Sigmoid colon (tissue), 7 donors: ENCODE measurements at regions of chr12 and their contacts with region 1.

Region 1: GRCh38 chr12:110826592-110827200 is 20.1 kb upstream of the CCDC63 start:
- DNase-seq: peak; percentile 90
- H3K4me3 ChIP-seq: peak overlapping the region in 1 of 4 donors; percentile 10
- H3K27ac ChIP-seq: no peak overlapping the region
- H3K4me1 ChIP-seq: no peaks in the 10 kb centered on the region
- H3K27me3 ChIP-seq: no peaks in the 10 kb centered on the region
- CTCF ChIP-seq: peak; percentile 67 to 83 (median 74)
- EP300 ChIP-seq: no peak
- POLR2A ChIP-seq: no peak

Region 2: DNA sequence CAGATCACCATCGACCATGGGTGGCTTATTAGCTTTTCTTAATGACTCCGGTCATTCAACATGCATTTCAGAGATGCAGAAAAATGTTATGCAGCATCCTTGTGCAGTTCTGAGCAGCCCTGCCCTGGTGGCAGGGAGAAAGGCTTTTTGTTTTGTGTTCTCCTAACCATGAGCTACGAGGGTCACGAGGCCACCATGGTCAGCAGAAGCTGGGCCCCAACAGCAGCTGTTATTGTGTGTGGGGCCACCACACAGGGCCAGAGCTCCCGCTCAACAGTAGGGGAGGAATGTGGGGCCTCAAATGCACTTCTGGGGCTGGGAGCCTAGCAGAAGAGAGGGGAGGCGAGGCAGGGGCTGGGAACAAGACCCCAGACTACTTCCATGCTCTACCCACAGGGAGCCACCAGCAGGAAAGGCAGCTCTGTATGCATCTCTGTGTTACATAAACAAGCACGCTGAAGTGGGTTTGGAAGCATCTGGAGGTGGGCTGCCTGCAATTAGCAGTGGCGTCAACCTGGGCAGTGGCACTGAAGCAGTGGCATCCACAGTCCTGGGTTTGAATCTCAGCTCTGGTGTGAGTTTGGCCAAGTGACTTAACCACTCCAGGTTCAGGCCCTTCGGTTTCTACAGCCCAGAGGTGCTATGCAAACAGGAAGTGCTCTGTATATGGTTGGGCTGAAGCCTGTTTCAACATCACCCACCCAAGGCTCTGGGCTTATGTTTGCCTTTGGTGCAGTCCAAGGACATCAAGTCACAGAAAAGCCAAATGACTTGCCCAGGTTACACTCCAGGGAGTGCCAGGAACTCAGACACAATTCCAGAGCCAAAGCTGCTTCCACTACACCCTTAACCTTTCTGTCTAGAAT is 962.6 kb before region 1 on chr12:
- intact Hi-C with region 1: no loop called
- DNase-seq: no peak
- H3K4me3 ChIP-seq: no peak overlapping the region
- H3K27ac ChIP-seq: peak overlapping the region; percentile 11 to 42 (median 14)
- H3K4me1 ChIP-seq: peaks cover 0 to 7% (median 0%) of the 10 kb centered on the region in 4 donors
- H3K27me3 ChIP-seq: no peaks in the 10 kb centered on the region
- CTCF ChIP-seq: no peak
- EP300 ChIP-seq: no peak
- POLR2A ChIP-seq: no peak

Region 3: GRCh38 chr12:110449799-110450497 is 376.7 kb before region 1 on chr12 and contains the start of gene ARPC3:
- intact Hi-C with region 1: loop called (anchors 10 kb)
- DNase-seq: peak; percentile 97
- H3K4me3 ChIP-seq: peak within 1 kb of the TSS; percentile 76 to 90 (median 82)
- H3K27ac ChIP-seq: peak within 1 kb of the TSS; percentile 90 to 93 (median 90)
- H3K4me1 ChIP-seq: peaks cover 2 to 26% (median 20%) of the 10 kb centered on the region in 4 donors
- H3K27me3 ChIP-seq: no peaks in the 10 kb centered on the region
- CTCF ChIP-seq: peak; percentile 79 to 91 (median 86)
- EP300 ChIP-seq: no peak
- POLR2A ChIP-seq: peak; percentile 17 to 56
- total RNA-seq, gene ARPC3: 156 to 304 (median 231) TPM

Region 4: GRCh38 chr12:110613771-110614684 is 212.7 kb before region 1 on chr12 and contains the start of gene TCTN1:
- intact Hi-C with region 1: loop called (anchors 10 kb)
- DNase-seq: peak; percentile 98
- H3K4me3 ChIP-seq: peak within 1 kb of the TSS; percentile 61 to 78 (median 68)
- H3K27ac ChIP-seq: peak within 1 kb of the TSS; percentile 70 to 79 (median 75)
- H3K4me1 ChIP-seq: peaks cover 0 to 10% (median 6%) of the 10 kb centered on the region in 4 donors
- H3K27me3 ChIP-seq: no peaks in the 10 kb centered on the region
- CTCF ChIP-seq: no peak
- EP300 ChIP-seq: peak in 1 of 4 donors; percentile 85
- POLR2A ChIP-seq: peak in 1 of 2 donors; percentile 9
- total RNA-seq, gene TCTN1: 34.6 to 38.6 (median 35.6) TPM

Region 5: DNA sequence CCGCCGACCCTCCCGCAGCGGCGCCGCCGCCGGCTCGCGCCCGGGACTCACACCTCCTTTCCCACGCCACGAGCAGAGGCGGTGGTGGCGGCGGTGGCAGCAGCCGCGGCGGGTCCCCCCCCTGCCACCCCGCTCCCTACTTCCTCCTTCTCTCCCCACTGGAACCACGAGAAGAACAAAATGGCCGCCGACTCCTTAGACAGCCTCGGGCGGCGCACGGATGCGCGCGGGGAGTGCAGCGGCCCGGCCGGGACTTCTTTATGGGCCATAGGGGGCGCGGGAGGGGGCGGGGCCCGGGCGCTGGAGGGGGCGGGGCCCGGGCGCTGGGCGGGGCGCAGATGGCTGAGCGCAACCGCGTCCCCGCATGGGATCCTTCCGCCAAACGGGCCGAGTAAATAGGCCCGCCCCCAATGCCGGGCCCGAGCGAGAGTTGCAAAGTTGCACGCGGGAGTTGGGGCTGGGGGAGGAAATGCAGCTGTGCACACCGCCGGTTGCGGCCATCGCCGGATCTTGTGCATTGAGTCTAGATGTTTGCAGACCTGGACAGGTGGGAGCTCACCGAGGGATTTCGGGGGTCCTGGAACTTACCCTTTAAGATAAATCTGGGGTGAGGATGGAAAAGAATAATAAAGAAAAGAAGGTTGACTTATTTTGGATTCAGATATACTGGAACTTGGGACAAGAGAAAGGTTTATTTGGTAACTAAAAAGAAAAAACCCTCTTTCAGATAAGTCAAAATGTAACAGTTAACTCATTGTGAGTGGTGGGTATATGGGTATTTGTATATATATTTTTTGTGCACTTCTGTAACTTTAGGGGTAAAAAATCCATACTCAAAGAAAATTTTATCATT is 83.8 kb before region 1 on chr12 and contains the start of gene PPP1CC:
- intact Hi-C with region 1: loop called (anchors 5 kb)
- DNase-seq: peak; percentile 97
- H3K4me3 ChIP-seq: peak within 1 kb of the TSS; percentile 86 to 94 (median 94)
- H3K27ac ChIP-seq: peak within 1 kb of the TSS; percentile 91 to 94 (median 94)
- H3K4me1 ChIP-seq: peaks cover 0 to 60% (median 44%) of the 10 kb centered on the region in 4 donors
- H3K27me3 ChIP-seq: no peaks in the 10 kb centered on the region
- CTCF ChIP-seq: no peak
- EP300 ChIP-seq: no peak
- POLR2A ChIP-seq: peak; percentile 68 to 81
- total RNA-seq, gene PPP1CC: 140 to 208 (median 171) TPM

Region 6: DNA sequence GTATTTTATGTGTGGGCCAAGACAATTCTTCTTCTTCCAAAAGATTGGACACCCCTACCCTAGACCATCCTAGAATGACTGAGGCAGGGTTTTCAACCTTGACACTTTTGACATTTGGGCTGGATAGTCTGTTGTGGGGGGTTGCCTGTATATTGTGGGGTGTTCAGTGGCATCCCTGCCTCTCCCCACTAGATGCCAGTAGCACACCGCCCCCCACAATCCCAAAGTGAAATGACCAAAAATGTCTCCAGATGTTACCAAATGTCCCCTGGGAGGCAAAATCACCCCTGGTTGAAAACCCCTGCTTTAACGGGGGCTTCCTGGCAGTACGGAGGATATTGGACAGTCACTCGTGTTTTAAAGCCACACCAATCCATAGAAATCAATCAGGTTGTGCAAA is 322.6 kb after region 1 on chr12:
- intact Hi-C with region 1: no loop called
- DNase-seq: no peak
- H3K4me3 ChIP-seq: no peak overlapping the region
- H3K27ac ChIP-seq: no peak overlapping the region
- H3K4me1 ChIP-seq: peaks cover 0 to 20% (median 18%) of the 10 kb centered on the region in 4 donors
- H3K27me3 ChIP-seq: peaks cover 0 to 4% (median 0%) of the 10 kb centered on the region in 3 donors
- CTCF ChIP-seq: no peak
- EP300 ChIP-seq: no peak
- POLR2A ChIP-seq: no peak